ENCODE measurements at regions of chr1 and their contacts with region 1.

Region 1: GRCh38 chr1:244652699-244653466 is at the start of gene DESI2:
- DNase-seq: peak; percentile 100
- H3K4me3 ChIP-seq: peak within 1 kb of the TSS; percentile 81 to 85
- H3K27ac ChIP-seq: peak within 1 kb of the TSS; percentile 89 to 93
- H3K4me1 ChIP-seq: peaks cover 0 to 40% (median 23%) of the 10 kb centered on the region in 4 donors
- H3K27me3 ChIP-seq: no peaks in the 10 kb centered on the region
- CTCF ChIP-seq: peak; percentile 53 to 63

Region 2: DNA sequence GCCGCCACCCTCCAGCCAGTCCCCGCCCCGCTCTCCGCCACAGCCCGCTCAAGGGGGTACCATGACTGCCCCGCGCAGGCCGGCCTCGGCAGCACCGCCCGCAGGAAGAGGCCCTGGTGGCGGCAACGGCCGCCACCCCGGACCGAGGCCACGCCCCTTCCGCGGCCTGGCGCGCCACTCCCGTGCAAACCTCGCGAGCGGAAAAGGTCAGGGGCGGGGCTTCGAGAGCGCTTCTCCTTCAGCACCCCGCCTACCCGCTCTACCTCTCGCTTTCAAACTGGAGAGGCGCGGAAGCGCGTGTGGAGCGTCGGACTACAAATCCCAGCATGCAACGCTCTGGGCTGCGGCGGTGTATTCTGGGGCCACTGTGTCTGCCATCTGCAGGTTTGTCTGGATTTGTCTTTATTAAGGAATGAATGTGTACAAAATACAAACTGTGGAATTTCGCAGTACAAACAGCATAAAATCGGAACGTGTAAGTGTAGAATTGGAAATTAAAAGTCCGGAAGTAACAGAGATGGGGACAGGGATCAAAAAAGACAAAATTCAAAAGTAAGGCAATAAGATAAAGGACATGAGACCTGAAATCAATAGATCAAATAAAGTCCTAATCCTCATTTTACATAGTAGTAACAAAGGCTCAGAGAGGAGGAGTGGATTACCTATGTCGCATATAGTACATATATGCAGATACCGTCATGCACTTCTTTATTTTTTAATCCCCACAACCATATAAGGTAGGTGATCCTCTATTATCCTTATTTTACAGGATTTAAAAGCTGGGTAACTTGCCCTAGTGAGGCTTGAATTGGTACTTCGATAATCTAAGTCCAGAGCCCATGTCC is 200.7 kb before region 1 on chr1:
- intact Hi-C with region 1: loop called (anchors 5 kb)
- DNase-seq: peak; percentile 99 to 100
- H3K4me3 ChIP-seq: peak overlapping the region; percentile 84 to 96
- H3K27ac ChIP-seq: peak overlapping the region; percentile 92 to 98
- H3K4me1 ChIP-seq: peaks cover 0 to 38% (median 22%) of the 10 kb centered on the region in 4 donors
- H3K27me3 ChIP-seq: no peaks in the 10 kb centered on the region
- CTCF ChIP-seq: peak; percentile 46 to 53

Region 3: GRCh38 chr1:244970661-244971551 is 318.0 kb after region 1 on chr1:
- intact Hi-C with region 1: loop called (anchors 2 kb)
- DNase-seq: peak; percentile 91 to 97
- H3K4me3 ChIP-seq: peak overlapping the region; percentile 70 to 81
- H3K27ac ChIP-seq: peak overlapping the region; percentile 99 to 100
- H3K4me1 ChIP-seq: peaks cover 0 to 17% (median 7%) of the 10 kb centered on the region in 4 donors
- H3K27me3 ChIP-seq: no peaks in the 10 kb centered on the region
- CTCF ChIP-seq: peak; percentile 52 to 74